Thyroid gland (tissue), 4 donors: ENCODE measurements at regions of chr19 and their contacts with region 1.

Region 1: DNA sequence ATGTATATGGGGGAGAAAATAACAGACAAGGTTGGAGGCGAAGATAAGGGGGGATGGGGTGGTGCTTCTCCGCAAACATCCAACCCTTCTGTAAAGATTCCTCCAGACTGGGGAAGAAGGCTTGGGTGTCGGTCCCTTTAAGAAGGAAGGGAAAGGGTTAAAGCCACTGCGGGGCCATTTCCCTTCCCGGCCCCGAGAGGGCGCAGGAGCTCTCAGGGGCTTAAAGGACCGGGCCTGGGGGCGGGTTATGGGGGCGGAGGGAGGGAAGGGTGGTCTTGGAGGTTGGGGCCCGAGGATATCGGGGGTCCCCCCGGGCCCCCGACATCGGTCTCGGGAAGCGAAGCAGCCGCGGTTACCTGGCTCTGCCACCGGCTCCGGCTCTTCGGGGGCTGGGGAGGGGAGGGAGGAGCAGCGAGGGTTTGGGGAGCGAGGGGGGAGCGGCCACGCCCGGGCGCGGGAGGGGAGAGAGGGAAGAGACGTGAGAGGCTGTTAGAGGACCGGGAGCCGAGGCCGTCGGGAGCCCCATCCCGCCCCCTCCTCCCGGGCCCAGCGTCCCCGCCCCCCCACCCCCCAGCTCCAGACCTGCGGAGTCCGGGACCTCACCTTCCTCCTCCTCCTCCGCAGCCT is 2.8 kb downstream of the TNNT1 start:
- DNase-seq: no peak
- H3K4me3 ChIP-seq: no peak overlapping the region
- H3K27ac ChIP-seq: no peak overlapping the region
- H3K4me1 ChIP-seq: peaks cover 0 to 7% of the 10 kb centered on the region in 2 donors
- H3K27me3 ChIP-seq: peaks cover 28% of the 10 kb centered on the region
- CTCF ChIP-seq: no peak
- POLR2A ChIP-seq: no peak

Region 2: GRCh38 chr19:55099533-55100506 is 46.4 kb before region 1 on chr19:
- intact Hi-C with region 1: no loop called
- DNase-seq: no peak
- H3K4me3 ChIP-seq: no peak overlapping the region
- H3K27ac ChIP-seq: no peak overlapping the region
- H3K4me1 ChIP-seq: no peaks in the 10 kb centered on the region
- H3K27me3 ChIP-seq: no peaks in the 10 kb centered on the region
- CTCF ChIP-seq: no peak
- POLR2A ChIP-seq: no peak

Region 3: DNA sequence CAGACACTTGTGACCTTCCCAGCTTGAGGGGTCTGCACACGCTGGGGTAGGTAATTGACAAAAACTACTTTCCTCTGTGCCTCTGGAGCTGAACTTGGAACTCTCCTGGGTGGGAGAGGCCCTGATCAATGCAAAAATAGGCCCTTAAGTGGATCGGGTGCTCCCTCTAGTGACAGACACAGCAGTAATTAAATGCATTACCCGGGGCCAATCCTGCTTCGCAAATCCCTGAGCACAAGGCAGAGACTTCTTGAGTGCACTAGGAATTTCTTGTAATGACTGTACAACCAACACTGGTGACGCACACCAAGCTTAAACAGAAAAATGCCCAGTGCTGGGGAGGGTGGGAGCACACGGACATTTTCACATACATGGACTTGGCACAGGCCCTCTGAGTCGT is 272.0 kb after region 1 on chr19:
- intact Hi-C with region 1: loop called (anchors 5 kb)
- DNase-seq: peak; percentile 67 to 69
- H3K4me3 ChIP-seq: no peak overlapping the region
- H3K27ac ChIP-seq: no peak overlapping the region
- H3K4me1 ChIP-seq: no peaks in the 10 kb centered on the region
- H3K27me3 ChIP-seq: no peaks in the 10 kb centered on the region
- CTCF ChIP-seq: peak; percentile 29 to 81 (median 68)
- POLR2A ChIP-seq: no peak

Region 4: DNA sequence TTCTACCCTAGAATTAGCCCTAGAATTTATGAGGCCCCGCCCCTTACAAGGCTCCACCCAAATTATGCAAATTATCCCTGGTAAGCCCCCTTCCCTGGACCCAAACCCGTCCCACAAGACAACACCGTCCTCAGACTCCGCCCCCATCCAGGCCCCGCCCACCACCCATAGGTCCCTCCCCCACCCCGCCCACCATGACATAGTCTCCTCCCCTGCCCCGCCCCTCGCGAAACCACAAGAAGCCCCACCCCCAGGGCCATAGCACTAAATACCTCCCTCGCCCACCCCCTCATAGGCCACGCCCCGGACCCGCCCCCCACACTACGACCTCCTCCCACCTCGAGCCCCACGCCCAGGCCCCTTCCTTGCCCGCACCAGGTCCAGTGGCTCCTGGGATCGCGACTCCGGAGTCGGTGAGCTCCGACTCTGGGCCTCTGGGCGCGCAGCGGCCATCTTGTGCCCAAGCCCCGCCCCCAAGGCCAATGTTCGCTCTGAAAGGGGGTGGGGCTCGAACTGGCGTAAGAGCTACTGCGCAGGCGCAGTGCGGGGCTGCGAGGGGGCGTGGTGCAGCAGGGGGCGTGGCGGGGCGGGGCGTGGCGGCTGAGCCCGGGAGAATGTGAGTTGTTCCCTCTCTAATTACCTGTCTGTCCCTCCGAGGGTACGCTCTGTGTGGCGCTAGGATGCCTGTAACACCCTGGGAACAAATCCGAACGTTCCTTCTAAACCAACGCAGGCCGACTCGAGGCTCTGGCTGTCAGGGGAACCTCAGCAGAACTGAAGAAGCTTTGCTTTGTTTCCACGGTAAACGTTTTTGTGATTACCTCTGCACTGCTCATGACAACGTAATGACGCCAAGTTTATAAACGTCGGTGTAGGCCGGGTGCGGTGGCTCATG is 478.2 kb after region 1 on chr19 and contains the start of gene ZNF784:
- intact Hi-C with region 1: loop called (anchors 10 kb)
- DNase-seq: peak; percentile 89 to 92
- H3K4me3 ChIP-seq: peak within 1 kb of the TSS in 1 of 3 donors; percentile 38
- H3K27ac ChIP-seq: peak within 1 kb of the TSS; percentile 93 to 98 (median 97)
- H3K4me1 ChIP-seq: peaks cover 0 to 5% of the 10 kb centered on the region in 2 donors
- H3K27me3 ChIP-seq: no peaks in the 10 kb centered on the region
- CTCF ChIP-seq: no peak
- POLR2A ChIP-seq: peak in 1 of 2 donors; percentile 72
- total RNA-seq, gene ZNF784: 5.1 to 10.0 (median 8.7) TPM